Activated CD4-positive, alpha-beta T cell treated with anti-CD3 and anti-CD28 coated beads, Interleukin-2, amount 10 ng/mL, durations not matched to agents 24 days and 14 days (primary cell): ENCODE measurements at regions of chr13 and their contacts with region 1.

Region 1: DNA sequence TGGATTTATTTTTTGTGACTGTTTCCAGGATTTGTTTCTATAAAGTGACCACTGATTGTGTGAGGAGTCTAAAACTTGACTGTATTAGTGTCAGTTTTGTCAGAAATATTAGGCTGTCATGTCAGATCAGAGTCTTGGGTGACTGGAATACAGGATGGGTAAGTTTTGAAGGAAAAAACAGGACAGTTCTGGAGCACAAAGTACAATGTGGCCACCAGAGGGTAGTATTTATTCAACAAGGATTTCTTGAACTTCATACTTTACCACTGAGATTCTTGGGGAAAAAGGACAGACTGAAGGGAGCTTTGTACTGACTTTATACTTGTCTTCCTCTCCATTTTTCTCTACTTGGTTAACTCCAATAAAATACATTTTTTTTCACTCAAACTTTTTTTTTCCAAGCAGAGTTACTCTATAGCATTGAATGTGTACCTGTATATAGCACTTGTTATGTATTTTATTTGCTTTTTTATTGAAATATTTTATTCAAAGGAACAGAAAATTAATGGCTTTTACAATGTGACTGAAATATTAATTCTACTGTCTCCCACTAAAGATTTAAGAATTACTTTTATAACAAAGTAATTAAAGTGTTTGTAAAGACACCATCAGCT is 51.1 kb downstream of the LMO7 start:
- DNase-seq: no peak
- H3K4me3 Mint-ChIP-seq: no peak overlapping the region
- H3K27ac Mint-ChIP-seq: no peak overlapping the region
- H3K4me1 Mint-ChIP-seq: peaks cover 5% of the 10 kb centered on the region
- H3K27me3 Mint-ChIP-seq: no peaks in the 10 kb centered on the region

Region 2: DNA sequence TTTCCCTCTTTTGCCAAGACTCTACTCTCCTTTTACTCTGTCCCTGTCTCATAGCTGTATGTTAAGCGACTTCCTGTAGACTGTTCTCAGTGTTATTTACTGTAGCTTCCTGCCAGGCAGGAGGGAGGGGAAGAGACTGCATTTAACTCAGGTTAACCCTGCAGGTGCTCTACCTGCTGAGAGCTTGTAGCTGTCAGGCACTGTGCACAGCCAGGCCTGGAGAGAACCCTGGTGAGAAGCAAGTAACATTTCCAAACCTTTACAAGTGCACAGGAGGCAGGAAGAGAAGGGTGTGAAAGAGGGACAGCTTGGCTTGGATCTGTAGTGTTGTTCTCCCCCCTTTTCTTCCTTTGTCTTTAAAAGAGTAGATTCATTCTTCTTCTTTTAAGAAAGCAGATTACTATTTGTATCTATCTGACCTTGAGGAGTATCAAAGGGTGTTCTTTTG is 115.9 kb after region 1 on chr13:
- intact Hi-C with region 1: loop called (anchors 5 kb)
- DNase-seq: peak; percentile 71
- H3K4me3 Mint-ChIP-seq: peak overlapping the region; percentile 6
- H3K27ac Mint-ChIP-seq: peak overlapping the region; percentile 13
- H3K4me1 Mint-ChIP-seq: peaks cover 30% of the 10 kb centered on the region
- H3K27me3 Mint-ChIP-seq: no peaks in the 10 kb centered on the region

Region 3: DNA sequence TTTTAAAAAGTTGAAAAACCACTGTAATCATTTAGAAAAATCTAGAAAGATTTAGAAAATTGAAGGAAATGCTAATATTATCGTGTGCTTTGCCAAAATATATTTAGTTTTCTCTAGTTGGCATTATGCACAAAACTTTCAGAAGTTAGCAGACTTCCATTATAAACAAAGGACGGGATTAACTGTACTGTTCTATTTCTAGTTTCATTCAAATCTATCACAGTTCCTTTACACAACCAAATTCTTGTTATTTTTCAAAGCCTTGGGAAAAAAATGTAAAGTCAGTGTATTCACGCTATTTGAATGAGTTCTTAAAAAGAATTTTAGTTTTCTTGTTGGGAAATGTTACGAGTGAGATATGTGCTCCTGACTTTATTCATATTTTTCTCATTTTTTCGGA is 226.7 kb after region 1 on chr13:
- intact Hi-C with region 1: no loop called
- DNase-seq: no peak
- H3K4me3 Mint-ChIP-seq: no peak overlapping the region
- H3K27ac Mint-ChIP-seq: no peak overlapping the region
- H3K4me1 Mint-ChIP-seq: no peaks in the 10 kb centered on the region
- H3K27me3 Mint-ChIP-seq: peaks cover 5% of the 10 kb centered on the region

Region 4: GRCh38 chr13:76461999-76462398 is 774.7 kb after region 1 on chr13:
- intact Hi-C with region 1: loop called (anchors 5 kb)
- DNase-seq: no peak
- H3K4me3 Mint-ChIP-seq: no peak overlapping the region
- H3K27ac Mint-ChIP-seq: no peak overlapping the region
- H3K4me1 Mint-ChIP-seq: no peaks in the 10 kb centered on the region
- H3K27me3 Mint-ChIP-seq: no peaks in the 10 kb centered on the region